ENCODE measurements at regions of chr17 and their contacts with region 1.

Region 1: GRCh38 chr17:5584383-5585286 is at the start of gene NLRP1:
- DNase-seq: peak; percentile 95
- H3K4me3 ChIP-seq: peak within 1 kb of the TSS; percentile 55 to 83 (median 57)
- H3K27ac ChIP-seq: peak within 1 kb of the TSS; percentile 91
- H3K4me1 ChIP-seq: peaks cover 26% of the 10 kb centered on the region
- H3K27me3 ChIP-seq: no peaks in the 10 kb centered on the region
- CTCF ChIP-seq: no peak
- POLR2A ChIP-seq: peak; percentile 95
- total RNA-seq, gene NLRP1: 50.0 and 53.9 TPM in 2 replicates

Region 2: DNA sequence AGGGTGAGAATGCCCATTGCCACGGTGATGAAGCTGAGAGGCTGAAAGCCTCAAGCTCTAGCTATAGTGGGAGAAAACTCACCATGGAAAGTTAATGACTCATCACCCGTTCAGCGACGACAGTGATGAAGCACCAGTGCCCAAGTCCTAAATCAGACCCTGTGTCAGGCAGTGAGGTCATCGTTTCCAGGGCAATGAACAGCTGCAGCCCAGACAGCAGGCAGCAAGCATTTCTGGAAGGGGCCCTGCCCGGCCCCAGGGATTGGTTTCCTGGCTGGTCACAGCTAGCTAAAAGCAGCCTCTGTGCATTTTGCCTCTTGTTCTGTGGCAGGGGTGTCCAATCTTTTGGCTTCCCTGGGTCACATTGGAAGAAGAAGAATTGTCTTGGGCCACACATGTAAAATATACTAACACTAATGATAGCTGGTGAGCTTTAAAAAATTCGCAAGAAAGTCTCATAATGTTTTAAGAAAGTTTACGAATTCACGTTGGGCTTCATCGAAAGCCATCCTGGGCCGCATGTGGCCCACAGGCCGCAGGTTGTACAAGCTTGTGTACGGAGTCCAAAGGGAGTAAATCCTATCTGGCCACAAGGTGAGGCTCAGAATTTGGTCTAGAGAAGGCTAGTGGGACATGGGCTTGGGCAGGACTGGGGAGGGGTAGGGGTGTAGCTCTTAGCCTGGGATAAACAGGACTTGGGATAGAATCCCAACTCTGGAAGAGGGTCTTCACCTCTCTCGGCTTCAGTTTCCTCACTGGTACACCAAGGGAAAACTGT is 57.6 kb before region 1 on chr17:
- CTCF ChIA-PET with region 1: interaction called, 3 read pairs
- POLR2A ChIA-PET with region 1: interaction called, 3 read pairs
- dilution Hi-C with region 1: no loop called
- intact Hi-C with region 1: loop called (anchors 1 kb)
- DNase-seq: peak; percentile 97
- H3K4me3 ChIP-seq: no peak overlapping the region
- H3K27ac ChIP-seq: peak overlapping the region; percentile 96
- H3K4me1 ChIP-seq: peaks cover 18% of the 10 kb centered on the region
- H3K27me3 ChIP-seq: no peaks in the 10 kb centered on the region
- CTCF ChIP-seq: no peak
- POLR2A ChIP-seq: peak; percentile 60

Region 3: GRCh38 chr17:5600041-5600440 is 15.4 kb after region 1 on chr17:
- CTCF ChIA-PET with region 1: no interaction called
- POLR2A ChIA-PET with region 1: no interaction called
- dilution Hi-C with region 1: no loop called
- intact Hi-C with region 1: no loop called
- DNase-seq: no peak
- H3K4me3 ChIP-seq: no peak overlapping the region
- H3K27ac ChIP-seq: no peak overlapping the region
- H3K4me1 ChIP-seq: no peaks in the 10 kb centered on the region
- H3K27me3 ChIP-seq: peaks cover 9 to 11% of the 10 kb centered on the region in 2 experiments
- CTCF ChIP-seq: no peak
- POLR2A ChIP-seq: no peak

Region 4: GRCh38 chr17:5706577-5707216 is 122.1 kb after region 1 on chr17:
- CTCF ChIA-PET with region 1: interaction called, 132 read pairs
- POLR2A ChIA-PET with region 1: no interaction called
- dilution Hi-C with region 1: no loop called
- intact Hi-C with region 1: loop called (anchors 1 kb)
- DNase-seq: peak; percentile 68
- H3K4me3 ChIP-seq: no peak overlapping the region
- H3K27ac ChIP-seq: no peak overlapping the region
- H3K4me1 ChIP-seq: no peaks in the 10 kb centered on the region
- H3K27me3 ChIP-seq: peaks cover 0 to 5% of the 10 kb centered on the region in 2 experiments
- CTCF ChIP-seq: peak; percentile 72 to 81
- POLR2A ChIP-seq: no peak

Region 5: GRCh38 chr17:6069539-6070429 is 485.1 kb after region 1 on chr17 and contains the start of gene WSCD1:
- CTCF ChIA-PET with region 1: interaction called, 5 read pairs
- POLR2A ChIA-PET with region 1: no interaction called
- dilution Hi-C with region 1: no loop called
- intact Hi-C with region 1: loop called (anchors 5 kb)
- DNase-seq: peak; percentile 44
- H3K4me3 ChIP-seq: peak within 1 kb of the TSS; percentile 75 to 87 (median 86)
- H3K27ac ChIP-seq: peak within 1 kb of the TSS; percentile 46
- H3K4me1 ChIP-seq: peaks cover 14% of the 10 kb centered on the region
- H3K27me3 ChIP-seq: peaks cover 10 to 16% of the 10 kb centered on the region in 2 experiments
- CTCF ChIP-seq: no peak
- POLR2A ChIP-seq: no peak
- total RNA-seq, gene WSCD1: 45.7 and 49.4 TPM in 2 replicates

Region 6: GRCh38 chr17:6413065-6413464 is 828.4 kb after region 1 on chr17:
- CTCF ChIA-PET with region 1: interaction called, 19 read pairs
- POLR2A ChIA-PET with region 1: no interaction called
- dilution Hi-C with region 1: no loop called
- intact Hi-C with region 1: no loop called
- DNase-seq: peak; percentile 67
- H3K4me3 ChIP-seq: no peak overlapping the region
- H3K27ac ChIP-seq: no peak overlapping the region
- H3K4me1 ChIP-seq: no peaks in the 10 kb centered on the region
- H3K27me3 ChIP-seq: no peaks in the 10 kb centered on the region
- CTCF ChIP-seq: peak; percentile 50 to 56
- POLR2A ChIP-seq: no peak

Region 7: DNA sequence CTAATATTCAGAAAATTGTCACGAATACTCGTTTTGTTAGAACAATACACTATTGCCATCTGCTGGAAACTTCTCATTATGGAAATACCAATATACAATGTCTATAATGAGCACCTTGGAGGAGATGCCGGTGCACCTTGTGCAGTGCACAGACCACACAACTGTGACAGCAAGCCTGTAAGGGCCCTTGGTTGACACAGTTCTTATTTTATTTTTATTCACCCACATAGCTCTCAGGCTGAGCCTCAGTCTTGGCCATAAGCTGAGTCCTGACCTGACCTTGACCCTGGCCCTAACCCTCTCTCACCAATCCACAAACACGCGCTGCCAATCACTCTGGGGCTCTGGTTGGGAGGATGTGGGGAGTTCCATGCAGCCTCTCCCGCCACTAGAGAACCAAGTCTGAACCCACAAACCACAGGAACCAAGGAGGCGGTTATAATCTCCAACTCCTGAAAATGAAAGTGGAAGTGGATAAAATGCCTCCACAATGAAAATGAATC is 842.7 kb after region 1 on chr17:
- CTCF ChIA-PET with region 1: interaction called, 93 read pairs
- POLR2A ChIA-PET with region 1: no interaction called
- dilution Hi-C with region 1: no loop called
- intact Hi-C with region 1: loop called (anchors 1 kb)
- DNase-seq: no peak
- H3K4me3 ChIP-seq: no peak overlapping the region
- H3K27ac ChIP-seq: no peak overlapping the region
- H3K4me1 ChIP-seq: no peaks in the 10 kb centered on the region
- H3K27me3 ChIP-seq: no peaks in the 10 kb centered on the region
- CTCF ChIP-seq: no peak
- POLR2A ChIP-seq: no peak

Region 8: GRCh38 chr17:6640536-6641373 is 1056.1 kb after region 1 on chr17 and contains the starts of genes KIAA0753 and TXNDC17:
- CTCF ChIA-PET with region 1: no interaction called
- POLR2A ChIA-PET with region 1: no interaction called
- dilution Hi-C with region 1: no loop called
- intact Hi-C with region 1: loop called (anchors 10 kb)
- DNase-seq: peak; percentile 96
- H3K4me3 ChIP-seq: peak within 1 kb of the TSS; percentile 44 to 86 (median 70)
- H3K27ac ChIP-seq: peak within 1 kb of the TSS; percentile 83
- H3K4me1 ChIP-seq: peaks cover 15% of the 10 kb centered on the region
- H3K27me3 ChIP-seq: no peaks in the 10 kb centered on the region
- CTCF ChIP-seq: no peak
- POLR2A ChIP-seq: peak; percentile 98
- total RNA-seq, gene KIAA0753: 20.1 and 23.9 TPM in 2 replicates
- total RNA-seq, gene TXNDC17: 101 and 103 TPM in 2 replicates

Measured in endothelial cell of umbilical vein (primary cell).